Dendritic cell treated with granulocyte-macrophage colony-stimulating factor and Interleukin-4, amounts not matched to agents 40 ng/mL and 50 ng/mL, for 4 days (primary cell): ENCODE measurements at regions of chrX and their contacts with region 1.

Region 1: GRCh38 chrX:129318375-129318774 is 204.9 kb downstream of the SMARCA1 start:
- H3K4me3 Mint-ChIP-seq: no peak overlapping the region
- H3K27ac Mint-ChIP-seq: no peak overlapping the region
- H3K4me1 Mint-ChIP-seq: no peaks in the 10 kb centered on the region
- H3K27me3 Mint-ChIP-seq: no peaks in the 10 kb centered on the region

Region 2: GRCh38 chrX:129462707-129463106 is 144.3 kb after region 1 on chrX:
- intact Hi-C with region 1: loop called (anchors 2 kb)
- H3K4me3 Mint-ChIP-seq: no peak overlapping the region
- H3K27ac Mint-ChIP-seq: no peak overlapping the region
- H3K4me1 Mint-ChIP-seq: no peaks in the 10 kb centered on the region
- H3K27me3 Mint-ChIP-seq: no peaks in the 10 kb centered on the region